H1 (cell line): ENCODE measurements at regions of chr9 and their contacts with region 1.

Region 1: DNA sequence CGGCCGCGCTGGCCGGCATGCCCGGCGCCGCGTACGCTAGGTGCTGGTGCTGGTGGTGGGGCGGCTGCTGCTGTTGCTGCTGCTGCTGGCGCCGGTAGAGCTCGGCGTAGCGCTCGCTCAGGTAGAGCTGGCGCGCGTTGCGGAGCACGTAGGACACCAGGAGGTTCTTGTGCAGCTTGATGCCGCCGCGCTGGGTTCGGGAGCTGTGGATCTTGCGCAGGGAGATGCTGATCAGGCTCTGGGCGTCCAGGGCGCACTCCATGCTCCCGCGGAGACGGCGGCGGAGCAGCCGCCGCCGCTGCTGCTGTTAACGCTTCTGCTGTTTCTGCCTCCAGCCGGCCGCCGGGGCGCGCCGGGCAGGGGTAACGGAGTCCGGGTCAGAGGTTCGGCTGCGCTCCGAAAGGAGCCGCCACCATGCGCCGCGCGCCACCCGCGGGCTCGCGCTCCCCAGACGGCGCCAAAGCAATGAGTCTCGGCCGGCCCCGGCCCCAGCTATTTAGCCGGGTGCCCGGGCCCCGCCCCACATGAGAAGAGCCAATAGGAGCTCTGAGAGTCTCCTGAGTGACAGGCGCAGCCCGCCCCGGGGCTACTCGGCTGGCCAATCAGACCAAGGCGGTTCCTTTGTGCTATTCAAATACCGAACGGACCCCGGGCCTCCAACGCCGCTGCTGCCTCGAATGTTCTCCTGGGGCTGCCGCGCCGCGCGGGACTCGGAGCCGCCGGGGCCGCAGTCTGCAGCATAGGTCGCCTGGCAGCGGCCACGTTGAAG is at the start of gene IER5L:
- DNase-seq: peak; percentile 80 to 97
- H3K4me3 ChIP-seq: peak within 1 kb of the TSS; percentile 38 to 71 (median 52)
- H3K27ac ChIP-seq: no peak within 1 kb of the TSS
- H3K4me1 ChIP-seq: peaks cover 0 to 24% (median 13%) of the 10 kb centered on the region in 4 experiments; a peak in 6 of 7 replicates
- H3K27me3 ChIP-seq: peaks cover 49 to 80% (median 72%) of the 10 kb centered on the region in 4 experiments
- CTCF ChIP-seq: no peak
- EP300 ChIP-seq: no peak
- POLR2A ChIP-seq: peak in 1 of 2 experiments; percentile 96; a peak in 2 of 3 replicates
- RAD21 ChIP-seq: no peak; a peak in 1 of 4 replicates
- total RNA-seq, gene IER5L: 1.0 and 1.2 TPM in 2 replicates

Region 2: GRCh38 chr9:129145822-129146292 is 32.1 kb before region 1 on chr9:
- CTCF ChIA-PET with region 1: interaction called, 831 read pairs
- POLR2A ChIA-PET with region 1: interaction called, 28 read pairs
- DNase-seq: peak; percentile 69 to 91
- H3K4me3 ChIP-seq: peak overlapping the region in 1 of 4 experiments; percentile 23; a peak in 1 of 8 replicates
- H3K27ac ChIP-seq: peak overlapping the region; percentile 60; the same call in 1 of the 2 replicates
- H3K4me1 ChIP-seq: peaks cover 32 to 46% (median 37%) of the 10 kb centered on the region in 4 experiments
- H3K27me3 ChIP-seq: no peaks in the 10 kb centered on the region
- CTCF ChIP-seq: no peak
- EP300 ChIP-seq: peak in 1 of 2 experiments; percentile 81; a peak in 1 of 3 replicates
- POLR2A ChIP-seq: peak in 1 of 2 experiments; percentile 50; a peak in 1 of 3 replicates
- RAD21 ChIP-seq: no peak

Region 3: GRCh38 chr9:129198319-129199011 is 20.5 kb after region 1 on chr9:
- CTCF ChIA-PET with region 1: interaction called, 41 read pairs
- POLR2A ChIA-PET with region 1: interaction called, 9 read pairs
- DNase-seq: no peak
- H3K4me3 ChIP-seq: no peak overlapping the region
- H3K27ac ChIP-seq: no peak overlapping the region
- H3K4me1 ChIP-seq: peaks cover 0 to 6% (median 3%) of the 10 kb centered on the region in 4 experiments; a peak in 4 of 7 replicates
- H3K27me3 ChIP-seq: peaks cover 0 to 19% (median 14%) of the 10 kb centered on the region in 4 experiments; a peak in 4 of 7 replicates
- CTCF ChIP-seq: no peak
- EP300 ChIP-seq: no peak
- POLR2A ChIP-seq: no peak
- RAD21 ChIP-seq: no peak

Region 4: GRCh38 chr9:129320575-129321263 is 142.7 kb after region 1 on chr9:
- CTCF ChIA-PET with region 1: interaction called, 14 read pairs
- POLR2A ChIA-PET with region 1: no interaction called
- DNase-seq: peak in 1 of 2 experiments; percentile 77
- H3K4me3 ChIP-seq: peak overlapping the region; percentile 8 to 54 (median 23); a peak in 5 of 8 replicates
- H3K27ac ChIP-seq: no peak overlapping the region
- H3K4me1 ChIP-seq: peaks cover 0 to 19% (median 12%) of the 10 kb centered on the region in 4 experiments; a peak in 6 of 7 replicates
- H3K27me3 ChIP-seq: peaks cover 0 to 7% (median 5%) of the 10 kb centered on the region in 4 experiments; a peak in 4 of 7 replicates
- CTCF ChIP-seq: no peak
- EP300 ChIP-seq: no peak
- POLR2A ChIP-seq: no peak
- RAD21 ChIP-seq: peak in 1 of 2 experiments; percentile 23; a peak in 2 of 4 replicates

Region 5: GRCh38 chr9:129569502-129570449 is 391.8 kb after region 1 on chr9:
- CTCF ChIA-PET with region 1: interaction called, 13 read pairs
- POLR2A ChIA-PET with region 1: interaction called, 4 read pairs
- DNase-seq: peak in 1 of 2 experiments; percentile 56
- H3K4me3 ChIP-seq: peak overlapping the region; percentile 16 to 63 (median 24); a peak in 5 of 8 replicates
- H3K27ac ChIP-seq: no peak overlapping the region
- H3K4me1 ChIP-seq: peaks cover 7 to 28% (median 17%) of the 10 kb centered on the region in 4 experiments
- H3K27me3 ChIP-seq: peaks cover 0 to 5% (median 1%) of the 10 kb centered on the region in 4 experiments; a peak in 2 of 7 replicates
- CTCF ChIP-seq: peak; percentile 35 to 57 (median 48)
- EP300 ChIP-seq: no peak
- POLR2A ChIP-seq: no peak
- RAD21 ChIP-seq: peak in 1 of 2 experiments; percentile 55; a peak in 1 of 4 replicates

Region 6: DNA sequence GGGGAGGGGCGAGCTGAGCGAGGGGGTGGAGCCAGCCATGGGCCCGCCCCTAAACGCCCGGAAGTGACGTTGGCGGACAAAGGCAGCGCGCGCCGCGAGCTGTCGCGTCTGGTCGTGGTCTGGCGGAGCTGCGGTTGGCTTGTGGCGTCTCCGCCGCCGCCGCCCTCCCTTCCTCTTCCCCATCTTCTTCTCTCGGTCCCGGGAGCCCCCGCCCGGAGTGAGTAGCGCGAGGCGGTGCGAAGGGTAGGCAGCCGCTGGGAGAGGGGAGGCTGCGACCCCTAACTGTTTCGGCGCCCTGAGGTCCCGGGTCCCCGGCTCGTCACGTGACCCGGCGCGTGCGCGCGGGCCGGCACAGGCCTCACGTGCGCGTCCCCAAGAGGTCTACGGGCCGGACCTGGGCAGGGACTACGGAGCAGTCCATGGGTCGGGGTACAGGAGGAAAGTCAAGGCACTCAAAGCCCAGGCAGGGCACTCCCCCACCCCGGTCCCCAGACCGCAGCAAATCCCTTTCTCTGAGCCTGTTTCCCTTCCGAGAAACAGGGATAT is 448.2 kb after region 1 on chr9 and contains the start of gene NTMT1:
- CTCF ChIA-PET with region 1: interaction called, 60 read pairs
- POLR2A ChIA-PET with region 1: interaction called, 9 read pairs
- DNase-seq: peak in 1 of 2 experiments; percentile 98
- H3K4me3 ChIP-seq: peak within 1 kb of the TSS; percentile 78 to 92 (median 83)
- H3K27ac ChIP-seq: peak within 1 kb of the TSS; percentile 88
- H3K4me1 ChIP-seq: peaks cover 10 to 19% (median 13%) of the 10 kb centered on the region in 4 experiments
- H3K27me3 ChIP-seq: peaks cover 3 to 9% (median 7%) of the 10 kb centered on the region in 4 experiments
- CTCF ChIP-seq: no peak
- EP300 ChIP-seq: no peak
- POLR2A ChIP-seq: peak; percentile 93 to 96
- RAD21 ChIP-seq: no peak
- total RNA-seq, gene NTMT1: 66.1 and 70.2 TPM in 2 replicates